Naive thymus-derived CD4-positive, alpha-beta T cell (primary cell): ENCODE measurements at regions of chrX and their contacts with region 1.

Region 1: DNA sequence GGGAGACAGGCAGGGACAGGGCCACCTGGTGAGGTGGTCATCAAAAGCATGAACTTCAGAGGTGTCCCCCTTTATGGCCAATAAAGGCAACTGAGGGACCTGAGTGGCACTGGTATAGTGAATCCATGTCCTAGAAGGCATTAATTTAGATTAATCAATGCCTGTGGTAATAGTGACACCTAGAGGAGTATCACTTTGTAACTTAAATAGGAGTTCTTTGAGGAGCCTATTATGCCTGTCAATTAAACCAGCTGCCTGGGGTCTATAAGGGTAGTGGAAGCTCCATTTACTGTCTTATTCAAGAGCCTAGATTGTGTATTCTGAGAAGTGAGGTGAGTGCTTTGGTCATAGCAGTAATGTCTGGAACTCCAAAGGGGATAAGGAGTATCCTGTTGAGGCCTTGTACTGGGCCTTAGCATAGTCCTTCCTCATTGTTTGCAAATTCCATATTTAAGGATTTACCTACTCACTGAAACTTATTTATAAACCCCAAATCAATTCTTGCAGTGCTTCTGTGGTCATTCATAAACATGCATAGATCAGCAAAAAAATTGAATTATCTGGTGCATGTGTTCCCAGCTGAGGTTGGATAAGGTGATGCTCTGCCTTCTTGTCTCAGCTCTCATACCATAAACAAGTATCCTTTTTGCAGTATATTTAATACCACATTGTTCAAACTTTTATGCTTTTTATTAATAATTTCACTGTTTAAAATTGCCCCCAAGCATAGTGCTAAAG is 213.8 kb upstream of the RADX start:
- DNase-seq: no peak
- ATAC-seq: no peak
- H3K4me3 ChIP-seq: no peak overlapping the region
- H3K4me3 Mint-ChIP-seq: no peak overlapping the region
- H3K27ac ChIP-seq: no peak overlapping the region
- H3K27ac Mint-ChIP-seq: no peak overlapping the region
- H3K4me1 ChIP-seq: no peaks in the 10 kb centered on the region
- H3K4me1 Mint-ChIP-seq: no peaks in the 10 kb centered on the region
- H3K27me3 ChIP-seq: no peaks in the 10 kb centered on the region
- H3K27me3 Mint-ChIP-seq: peaks cover 0 to 7% (median 0%) of the 10 kb centered on the region in 5 donors

Region 2: DNA sequence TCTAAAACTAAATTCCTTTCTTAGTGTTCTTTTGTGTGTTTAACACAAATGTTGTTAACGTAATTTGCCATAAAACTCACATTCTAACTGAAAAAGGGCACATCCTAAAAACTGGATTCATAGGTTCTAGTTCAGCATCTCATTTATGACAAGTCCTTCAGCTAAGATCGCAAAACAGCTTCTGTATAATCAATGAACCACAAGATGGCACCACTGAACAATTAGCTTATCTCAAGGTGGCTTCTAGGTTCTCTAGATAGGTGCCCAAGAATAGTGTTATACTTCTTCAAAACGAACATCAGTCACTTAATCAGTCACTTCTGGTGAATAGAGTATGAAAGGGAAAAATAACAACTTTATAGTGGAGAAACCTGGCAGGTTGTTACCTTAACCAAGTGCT is 521.3 kb before region 1 on chrX:
- CTCF ChIA-PET with region 1: no interaction called
- POLR2A ChIA-PET with region 1: no interaction called
- intact Hi-C with region 1: loop called in 1 of 2 experiments (anchors 10 kb)
- DNase-seq: peak in 1 of 9 donors; percentile 1
- ATAC-seq: no peak
- H3K4me3 ChIP-seq: no peak overlapping the region
- H3K4me3 Mint-ChIP-seq: no peak overlapping the region
- H3K27ac ChIP-seq: no peak overlapping the region
- H3K27ac Mint-ChIP-seq: no peak overlapping the region
- H3K4me1 ChIP-seq: no peaks in the 10 kb centered on the region
- H3K4me1 Mint-ChIP-seq: no peaks in the 10 kb centered on the region
- H3K27me3 ChIP-seq: no peaks in the 10 kb centered on the region
- H3K27me3 Mint-ChIP-seq: no peaks in the 10 kb centered on the region

Region 3: GRCh38 chrX:106144755-106145639 is 253.0 kb before region 1 on chrX:
- CTCF ChIA-PET with region 1: no interaction called
- POLR2A ChIA-PET with region 1: no interaction called
- intact Hi-C with region 1: no loop called
- DNase-seq: no peak
- ATAC-seq: no peak
- H3K4me3 ChIP-seq: no peak overlapping the region
- H3K4me3 Mint-ChIP-seq: no peak overlapping the region
- H3K27ac ChIP-seq: no peak overlapping the region
- H3K27ac Mint-ChIP-seq: no peak overlapping the region
- H3K4me1 ChIP-seq: no peaks in the 10 kb centered on the region
- H3K4me1 Mint-ChIP-seq: no peaks in the 10 kb centered on the region
- H3K27me3 ChIP-seq: no peaks in the 10 kb centered on the region
- H3K27me3 Mint-ChIP-seq: no peaks in the 10 kb centered on the region